Sigmoid colon (tissue), 7 donors: ENCODE measurements at regions of chr17 and their contacts with region 1.

Region 1: DNA sequence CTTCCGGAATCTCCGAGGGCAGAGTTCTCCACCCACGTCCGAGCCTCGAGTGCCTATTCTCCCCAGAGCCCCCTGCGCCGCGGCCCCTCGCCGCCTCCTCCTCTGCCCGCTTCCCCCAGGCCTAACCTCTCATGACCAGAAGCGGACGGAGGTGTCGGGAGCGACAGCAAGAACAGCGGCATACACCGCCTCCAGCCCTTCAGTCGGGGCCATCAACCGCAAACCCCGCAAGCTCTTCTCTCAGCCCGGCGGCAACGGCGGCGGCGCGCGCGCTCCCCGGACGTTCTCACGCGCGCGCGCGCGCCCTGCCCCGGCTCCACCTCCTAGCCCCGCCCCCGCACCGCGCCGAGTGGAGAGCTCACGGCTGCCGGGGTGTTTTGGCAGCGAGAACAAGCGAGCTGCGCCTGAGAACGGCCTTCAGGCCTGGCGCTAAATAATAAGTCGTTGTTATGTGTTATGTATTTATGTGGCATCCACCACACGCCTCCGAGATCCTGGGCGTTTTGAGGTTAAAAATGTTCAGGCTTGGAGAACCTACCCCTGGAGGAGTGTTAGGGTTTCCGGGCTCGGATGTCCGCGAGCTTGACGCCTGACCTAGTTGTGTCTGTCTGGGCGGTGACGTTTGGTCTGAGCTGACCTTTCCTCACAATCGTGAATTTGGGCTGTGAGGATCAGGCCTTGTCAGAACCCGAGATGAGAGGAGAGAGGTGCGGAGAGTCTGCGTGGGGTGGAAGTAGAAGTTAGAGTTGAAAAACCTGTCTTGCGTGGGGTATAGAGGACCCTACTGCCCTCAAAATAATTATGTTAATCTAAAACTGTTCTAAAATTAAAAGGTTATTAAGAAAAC is at the start of gene RNFT1:
- DNase-seq: peak; percentile 94
- H3K4me3 ChIP-seq: peak within 1 kb of the TSS; percentile 71 to 88 (median 85)
- H3K27ac ChIP-seq: peak within 1 kb of the TSS; percentile 93 to 97 (median 94)
- H3K4me1 ChIP-seq: peaks cover 0 to 18% (median 17%) of the 10 kb centered on the region in 4 donors
- H3K27me3 ChIP-seq: no peaks in the 10 kb centered on the region
- CTCF ChIP-seq: no peak
- EP300 ChIP-seq: no peak
- POLR2A ChIP-seq: peak; percentile 17 to 65
- total RNA-seq, gene RNFT1: 11.8 to 16.8 (median 15.2) TPM

Region 2: GRCh38 chr17:59746849-59747445 is 217.8 kb before region 1 on chr17:
- intact Hi-C with region 1: loop called (anchors 10 kb)
- DNase-seq: no peak
- H3K4me3 ChIP-seq: no peak overlapping the region
- H3K27ac ChIP-seq: no peak overlapping the region
- H3K4me1 ChIP-seq: no peaks in the 10 kb centered on the region
- H3K27me3 ChIP-seq: no peaks in the 10 kb centered on the region
- CTCF ChIP-seq: peak; percentile 31 to 63 (median 56)
- EP300 ChIP-seq: no peak
- POLR2A ChIP-seq: no peak